ENCODE measurements at regions of chr16 and their contacts with region 1.

Region 1: DNA sequence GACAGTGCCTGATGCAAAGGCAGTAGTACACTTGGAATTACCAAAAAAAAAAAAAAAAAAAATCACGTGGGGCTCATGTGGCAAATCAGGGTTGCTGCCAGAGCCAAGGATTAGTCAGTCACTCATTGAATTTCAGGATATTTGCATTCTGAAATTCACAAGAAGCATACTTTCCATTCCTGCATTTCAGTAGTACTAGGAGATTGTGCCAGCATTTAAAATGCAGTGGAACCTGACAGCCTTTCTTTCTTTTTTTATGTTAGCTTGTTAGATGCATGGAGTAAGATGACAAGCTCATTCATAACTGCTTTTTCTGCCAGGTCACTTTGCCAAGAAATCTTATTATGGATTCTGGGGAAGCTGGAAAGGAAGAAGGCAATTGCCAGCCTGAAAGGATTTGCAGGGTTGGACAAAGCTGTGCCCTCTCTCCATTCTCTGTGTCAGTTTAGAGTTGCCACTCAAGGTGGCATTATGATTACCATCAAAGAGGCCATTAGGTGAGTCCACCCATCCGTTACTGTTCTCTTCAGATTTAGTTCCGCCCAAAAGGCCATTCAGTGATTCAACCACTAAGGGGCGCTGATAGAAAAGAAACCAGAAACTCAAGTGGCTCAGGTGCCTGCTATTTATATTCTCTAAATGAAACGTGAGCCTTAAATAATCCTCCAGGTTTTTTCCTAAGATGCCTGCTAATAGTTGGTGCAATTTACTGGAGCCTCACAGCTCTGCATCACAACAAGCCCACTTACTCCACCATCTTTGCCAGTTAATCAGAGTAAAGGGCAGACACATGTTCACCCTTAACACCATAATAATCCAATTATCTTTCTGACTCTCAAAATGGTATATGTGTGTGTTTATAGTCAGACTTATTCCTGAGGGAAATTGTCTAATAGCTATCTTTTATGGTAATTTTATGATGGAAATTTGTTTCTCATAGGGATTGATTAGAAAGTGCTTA is 59.0 kb downstream of the TANGO6 start:
- DNase-seq: peak; percentile 77
- H3K4me3 ChIP-seq: no peak overlapping the region
- H3K27ac ChIP-seq: no peak overlapping the region
- H3K4me1 ChIP-seq: no peaks in the 10 kb centered on the region
- H3K27me3 ChIP-seq: no peaks in the 10 kb centered on the region
- CTCF ChIP-seq: peak; percentile 61 to 73
- POLR2A ChIP-seq: no peak

Region 2: DNA sequence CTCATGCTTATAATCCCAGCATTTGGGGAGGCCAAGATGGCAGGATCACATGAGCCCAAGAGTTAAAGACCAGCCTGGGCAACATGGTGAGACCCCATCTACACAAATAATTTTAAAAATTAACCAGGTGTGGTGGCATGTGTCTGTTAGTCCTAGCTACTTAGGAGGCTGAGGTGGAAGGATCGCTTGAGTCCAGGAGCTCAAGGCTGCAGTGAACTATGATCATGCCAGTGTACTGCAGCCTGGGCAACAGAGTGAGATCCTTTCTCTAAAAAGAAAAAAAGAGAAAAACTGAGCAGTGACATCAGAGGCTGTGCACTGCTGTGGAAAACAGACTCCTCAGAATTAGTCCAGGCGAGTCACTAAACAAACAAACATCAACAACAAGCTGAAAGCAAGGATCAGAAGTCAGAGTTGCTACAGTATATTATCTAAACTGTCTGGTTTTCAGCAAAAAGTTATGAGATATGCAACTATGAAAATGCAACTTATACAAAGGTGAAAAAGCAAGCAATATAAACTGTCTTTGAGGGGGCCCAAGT is 1834.0 kb before region 1 on chr16:
- CTCF ChIA-PET with region 1: no interaction called
- POLR2A ChIA-PET with region 1: no interaction called
- dilution Hi-C with region 1: no loop called
- intact Hi-C with region 1: no loop called
- DNase-seq: no peak
- H3K4me3 ChIP-seq: no peak overlapping the region
- H3K27ac ChIP-seq: no peak overlapping the region
- H3K4me1 ChIP-seq: no peaks in the 10 kb centered on the region
- H3K27me3 ChIP-seq: no peaks in the 10 kb centered on the region
- CTCF ChIP-seq: no peak
- POLR2A ChIP-seq: no peak

Region 3: GRCh38 chr16:68528686-68529379 is 373.5 kb before region 1 on chr16:
- CTCF ChIA-PET with region 1: interaction called, 3 read pairs
- POLR2A ChIA-PET with region 1: no interaction called
- dilution Hi-C with region 1: no loop called
- intact Hi-C with region 1: loop called (anchors 1 kb)
- DNase-seq: peak; percentile 77
- H3K4me3 ChIP-seq: no peak overlapping the region
- H3K27ac ChIP-seq: no peak overlapping the region
- H3K4me1 ChIP-seq: peaks cover 10% of the 10 kb centered on the region
- H3K27me3 ChIP-seq: peaks cover 2 to 3% of the 10 kb centered on the region in 2 experiments
- CTCF ChIP-seq: peak; percentile 88 to 96
- POLR2A ChIP-seq: no peak

Region 4: DNA sequence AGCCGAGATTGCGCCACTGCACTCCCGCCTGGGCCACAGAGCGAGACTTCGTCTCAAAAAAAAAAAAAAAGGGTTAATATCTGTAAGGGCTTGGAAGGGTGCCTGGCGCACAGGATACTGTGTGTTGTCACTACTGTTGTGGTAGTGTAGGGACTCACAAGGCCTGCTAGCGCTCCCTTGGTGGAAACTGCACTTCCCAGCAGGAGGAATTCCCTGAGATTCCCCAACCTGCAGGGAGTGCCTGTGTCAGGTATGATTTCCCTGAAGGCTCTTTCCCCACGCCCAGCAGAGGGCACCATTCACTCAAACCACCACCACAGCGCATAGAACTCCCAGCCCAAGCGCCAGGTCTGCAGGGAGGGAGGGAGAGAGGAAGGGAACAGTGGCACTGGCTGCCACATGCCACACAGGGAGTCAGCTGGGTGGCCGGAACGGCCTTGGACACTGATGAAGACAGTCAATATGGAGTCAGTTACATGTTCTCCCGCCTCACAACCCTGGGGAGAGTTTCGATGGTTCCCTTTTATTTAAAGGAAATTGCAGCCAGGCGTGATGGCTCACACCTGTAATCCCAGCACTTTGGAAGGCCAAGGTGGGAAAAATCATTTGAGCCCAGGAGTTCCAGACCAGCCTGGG is 197.9 kb before region 1 on chr16:
- CTCF ChIA-PET with region 1: no interaction called
- POLR2A ChIA-PET with region 1: no interaction called
- dilution Hi-C with region 1: no loop called
- intact Hi-C with region 1: loop called (anchors 1 kb)
- DNase-seq: peak; percentile 52
- H3K4me3 ChIP-seq: no peak overlapping the region
- H3K27ac ChIP-seq: no peak overlapping the region
- H3K4me1 ChIP-seq: peaks cover 3% of the 10 kb centered on the region
- H3K27me3 ChIP-seq: no peaks in the 10 kb centered on the region
- CTCF ChIP-seq: peak; percentile 78 to 85
- POLR2A ChIP-seq: no peak

Region 5: DNA sequence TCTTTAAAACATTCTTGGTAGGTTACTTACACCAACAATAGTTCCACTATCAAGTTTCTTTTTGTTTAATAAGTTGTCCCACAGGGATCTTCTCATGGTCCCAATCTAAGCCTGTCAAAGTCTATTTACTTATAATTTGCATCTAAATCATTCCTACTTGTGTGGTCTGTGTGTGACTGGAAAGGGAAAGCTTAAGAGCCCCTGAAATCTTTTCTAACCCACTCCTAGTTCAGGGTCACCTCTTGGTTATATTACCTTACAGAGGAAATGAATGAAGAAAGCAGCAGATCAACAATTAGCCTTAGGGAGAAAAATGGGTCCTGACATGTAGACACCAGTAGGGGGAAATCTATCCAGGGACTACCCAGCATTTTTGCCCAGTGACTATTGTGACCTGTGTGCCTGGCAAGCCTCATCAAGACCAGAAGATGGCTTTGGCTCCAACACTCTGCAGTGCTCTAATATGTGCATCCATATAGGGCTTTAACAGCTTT is 92.8 kb after region 1 on chr16:
- CTCF ChIA-PET with region 1: interaction called, 6 read pairs
- POLR2A ChIA-PET with region 1: no interaction called
- dilution Hi-C with region 1: no loop called
- intact Hi-C with region 1: loop called (anchors 1 kb)
- DNase-seq: peak; percentile 53
- H3K4me3 ChIP-seq: no peak overlapping the region
- H3K27ac ChIP-seq: peak overlapping the region; percentile 69
- H3K4me1 ChIP-seq: peaks cover 40% of the 10 kb centered on the region
- H3K27me3 ChIP-seq: no peaks in the 10 kb centered on the region
- CTCF ChIP-seq: peak; percentile 34 to 48
- POLR2A ChIP-seq: no peak

Region 6: DNA sequence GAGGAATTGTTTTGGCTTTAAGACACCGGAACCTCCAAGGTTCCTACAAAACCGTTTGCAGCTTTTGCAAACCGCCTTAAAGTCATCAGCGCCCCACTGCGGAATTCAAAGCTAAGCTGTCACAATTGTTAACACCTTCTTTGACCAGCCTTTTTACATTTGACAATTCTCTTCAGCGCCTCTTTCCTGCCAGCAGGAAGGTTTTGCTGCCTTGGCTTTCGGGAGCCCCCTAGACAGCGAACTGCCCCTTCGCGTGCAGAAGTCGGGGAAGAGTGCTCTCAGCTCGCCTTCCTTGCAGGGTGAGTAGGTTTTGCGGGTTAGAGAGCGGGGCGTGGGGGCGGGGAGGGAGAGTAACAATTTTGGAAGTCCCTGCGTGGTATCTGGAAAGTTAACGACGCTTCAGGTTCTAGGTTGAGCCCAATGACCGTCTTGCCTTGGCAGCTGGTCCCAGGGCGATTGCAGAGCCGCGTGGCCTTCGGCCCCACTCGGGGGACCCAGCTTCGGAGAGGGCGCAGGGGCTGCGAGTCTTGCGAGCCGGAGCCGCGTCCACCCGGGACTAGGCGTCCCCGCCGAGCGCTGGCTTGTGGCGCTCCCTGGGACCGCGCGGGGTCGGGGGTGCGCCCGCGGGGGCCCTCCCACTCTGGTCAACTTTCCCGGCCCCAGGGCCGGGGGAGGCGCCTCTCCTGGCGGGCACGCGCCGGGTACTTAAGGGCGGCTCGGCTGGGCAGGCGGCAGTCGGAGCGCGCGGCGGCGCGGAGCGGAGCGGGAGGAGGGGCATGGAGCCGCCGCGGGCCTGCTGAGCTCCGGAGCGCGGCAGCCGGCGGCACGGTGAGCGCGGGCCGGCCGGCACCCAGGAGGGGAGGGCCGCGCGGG is 203.4 kb after region 1 on chr16 and contains the start of gene HAS3:
- CTCF ChIA-PET with region 1: interaction called, 24 read pairs
- POLR2A ChIA-PET with region 1: no interaction called
- dilution Hi-C with region 1: no loop called
- intact Hi-C with region 1: loop called (anchors 1 kb)
- DNase-seq: peak; percentile 69
- H3K4me3 ChIP-seq: peak within 1 kb of the TSS; percentile 40 to 57 (median 54)
- H3K27ac ChIP-seq: no peak within 1 kb of the TSS
- H3K4me1 ChIP-seq: peaks cover 21% of the 10 kb centered on the region
- H3K27me3 ChIP-seq: no peaks in the 10 kb centered on the region
- CTCF ChIP-seq: peak; percentile 16 to 32
- POLR2A ChIP-seq: peak; percentile 57
- total RNA-seq, gene HAS3: 1.8 TPM in 2 replicates

Region 7: GRCh38 chr16:69112285-69113129 is 210.2 kb after region 1 on chr16:
- CTCF ChIA-PET with region 1: interaction called, 33 read pairs
- POLR2A ChIA-PET with region 1: no interaction called
- dilution Hi-C with region 1: no loop called
- intact Hi-C with region 1: no loop called
- DNase-seq: peak; percentile 52
- H3K4me3 ChIP-seq: no peak overlapping the region
- H3K27ac ChIP-seq: no peak overlapping the region
- H3K4me1 ChIP-seq: peaks cover 18% of the 10 kb centered on the region
- H3K27me3 ChIP-seq: no peaks in the 10 kb centered on the region
- CTCF ChIP-seq: peak; percentile 90
- POLR2A ChIP-seq: no peak